PC-3 (cell line): ENCODE measurements at regions of chr1 and their contacts with region 1.

Region 1: GRCh38 chr1:151846062-151846568 is 6.5 kb upstream of the C2CD4D start:
- DNase-seq: peak; percentile 80
- ATAC-seq: peak; percentile 97
- H3K4me3 ChIP-seq: no peak overlapping the region
- H3K27ac ChIP-seq: peak overlapping the region; percentile 50
- H3K4me1 ChIP-seq: peaks cover 19% of the 10 kb centered on the region
- H3K27me3 ChIP-seq: no peaks in the 10 kb centered on the region
- CTCF ChIP-seq: peak; percentile 54

Region 2: DNA sequence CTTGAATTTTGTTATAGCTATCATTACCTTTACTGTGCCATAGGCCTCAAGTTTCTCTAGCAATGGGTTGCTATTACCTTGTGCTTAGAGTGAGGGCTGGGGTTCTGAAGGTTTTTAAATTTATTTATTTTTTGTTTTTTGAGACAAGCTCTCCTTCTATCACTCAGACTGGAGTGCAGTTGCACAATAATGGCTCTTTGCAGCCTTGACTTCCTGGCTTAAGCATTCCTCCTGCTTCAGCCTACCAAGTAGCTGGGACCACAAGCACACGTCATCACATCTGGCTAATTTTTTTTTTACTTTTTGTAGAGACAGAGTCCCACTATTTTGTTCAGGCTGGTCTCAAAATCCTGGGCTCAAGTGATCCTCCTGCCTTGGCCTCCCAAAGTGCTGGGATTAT is 192.7 kb before region 1 on chr1:
- CTCF ChIA-PET with region 1: interaction called, 11 read pairs
- POLR2A ChIA-PET with region 1: no interaction called
- intact Hi-C with region 1: no loop called
- DNase-seq: no peak
- ATAC-seq: no peak
- H3K4me3 ChIP-seq: no peak overlapping the region
- H3K27ac ChIP-seq: no peak overlapping the region
- H3K4me1 ChIP-seq: no peaks in the 10 kb centered on the region
- H3K27me3 ChIP-seq: no peaks in the 10 kb centered on the region
- CTCF ChIP-seq: no peak

Region 3: GRCh38 chr1:151881456-151881855 is 35.3 kb after region 1 on chr1:
- CTCF ChIA-PET with region 1: interaction called, 12 read pairs
- POLR2A ChIA-PET with region 1: interaction called, 4 read pairs
- intact Hi-C with region 1: no loop called
- DNase-seq: peak; percentile 23
- ATAC-seq: 0 out of 2 replicates have a peak, but pooled peaks have one; percentile 43
- H3K4me3 ChIP-seq: no peak overlapping the region
- H3K27ac ChIP-seq: no peak overlapping the region
- H3K4me1 ChIP-seq: peaks cover 12% of the 10 kb centered on the region
- H3K27me3 ChIP-seq: no peaks in the 10 kb centered on the region
- CTCF ChIP-seq: peak; percentile 48; the same call in 1 of the 2 replicates

Region 4: DNA sequence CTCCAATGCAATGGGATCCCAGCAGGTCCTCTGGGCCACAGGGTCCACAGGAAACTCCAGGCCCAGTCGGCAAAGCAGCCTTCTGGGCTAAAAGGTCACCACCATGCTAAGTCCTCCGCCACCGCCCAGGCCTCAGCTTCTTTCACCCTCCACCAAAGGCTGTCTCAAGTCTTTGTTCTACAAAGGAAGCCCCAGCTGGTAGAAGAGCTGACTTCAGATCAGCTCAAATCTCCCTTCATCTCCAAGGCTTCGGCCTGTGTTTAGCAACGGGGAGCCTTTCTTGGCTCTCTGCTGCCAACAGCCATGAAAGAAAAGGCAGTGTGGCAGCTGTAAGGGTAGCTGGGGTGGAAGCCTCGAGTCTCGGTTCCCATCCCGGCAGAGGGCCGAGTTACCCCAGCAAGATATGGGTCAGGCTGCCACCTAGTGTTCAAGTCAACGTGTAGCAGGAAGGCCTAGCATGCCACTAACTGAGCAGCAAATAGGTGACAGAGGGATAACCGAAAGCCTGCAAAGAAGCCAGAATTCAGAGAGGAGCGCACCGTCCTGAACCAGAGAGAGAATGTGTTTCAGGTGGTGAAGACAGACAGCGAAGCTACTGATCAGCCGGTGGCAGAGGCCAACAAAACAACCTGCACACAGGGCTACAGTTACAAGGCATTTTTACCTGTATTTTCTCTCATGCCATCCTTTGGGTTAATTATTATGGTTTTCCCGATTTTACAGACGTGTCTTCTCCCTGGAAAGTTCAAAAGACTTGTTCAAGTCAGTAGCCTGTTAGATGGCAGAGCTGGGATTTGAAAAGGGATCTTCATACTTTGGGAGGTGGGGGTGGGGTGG is 594.7 kb after region 1 on chr1:
- CTCF ChIA-PET with region 1: no interaction called
- POLR2A ChIA-PET with region 1: no interaction called
- intact Hi-C with region 1: no loop called
- DNase-seq: peak; percentile 82
- ATAC-seq: peak; percentile 97
- H3K4me3 ChIP-seq: no peak overlapping the region
- H3K27ac ChIP-seq: no peak overlapping the region
- H3K4me1 ChIP-seq: peaks cover 6% of the 10 kb centered on the region
- H3K27me3 ChIP-seq: peaks cover 25% of the 10 kb centered on the region
- CTCF ChIP-seq: peak; percentile 94